Activated CD4-positive, alpha-beta T cell treated with anti-CD3 and anti-CD28 coated beads for 36 hours (primary cell): ENCODE measurements at regions of chr1 and their contacts with region 1.

Region 1: GRCh38 chr1:192808518-192809306 is at the start of gene RGS2:
- DNase-seq: peak; percentile 92
- ATAC-seq: peak; percentile 93
- H3K4me3 Mint-ChIP-seq: peak within 1 kb of the TSS; percentile 87
- H3K27ac Mint-ChIP-seq: peak within 1 kb of the TSS; percentile 92
- H3K4me1 Mint-ChIP-seq: peaks cover 29% of the 10 kb centered on the region
- H3K27me3 Mint-ChIP-seq: no peaks in the 10 kb centered on the region
- total RNA-seq, gene RGS2: 5.1 to 5.3 TPM

Region 2: GRCh38 chr1:192580351-192580962 is 228.3 kb before region 1 on chr1:
- CTCF ChIA-PET with region 1: no interaction called
- POLR2A ChIA-PET with region 1: no interaction called
- intact Hi-C with region 1: loop called in 1 of 2 experiments (anchors 10 kb)
- DNase-seq: no peak
- ATAC-seq: peak; percentile 38
- H3K4me3 Mint-ChIP-seq: peak overlapping the region; percentile 76
- H3K27ac Mint-ChIP-seq: no peak overlapping the region
- H3K4me1 Mint-ChIP-seq: peaks cover 50% of the 10 kb centered on the region
- H3K27me3 Mint-ChIP-seq: no peaks in the 10 kb centered on the region

Region 3: DNA sequence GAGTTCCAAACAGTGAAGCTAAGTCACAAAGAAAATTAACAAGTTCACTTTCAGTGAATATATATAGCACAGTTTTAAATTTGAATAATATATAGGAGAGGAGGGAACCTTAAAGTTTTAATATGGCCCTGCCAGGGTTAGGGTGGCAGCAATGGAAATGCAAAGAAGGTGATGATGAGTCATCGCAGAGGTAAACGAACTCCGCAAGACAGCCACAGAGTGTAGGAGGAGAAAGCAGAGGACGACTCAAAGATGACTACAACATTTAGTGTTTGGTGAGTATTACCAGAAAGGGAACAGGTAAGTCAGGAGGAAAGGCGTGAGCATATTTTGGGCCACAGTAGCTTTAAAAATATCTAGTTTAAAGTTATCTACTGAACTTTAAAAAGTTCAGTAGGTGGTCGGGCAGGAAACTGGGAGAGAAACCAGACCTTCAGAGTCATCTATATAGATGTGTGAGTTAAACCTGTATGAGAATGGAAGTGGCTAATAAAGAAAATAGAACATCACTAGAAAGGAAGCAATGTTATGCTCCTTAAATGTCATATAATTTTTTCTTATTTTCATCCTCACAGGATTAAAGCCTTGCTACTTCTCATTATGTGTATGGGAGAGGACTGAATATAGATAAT is 174.8 kb after region 1 on chr1:
- CTCF ChIA-PET with region 1: interaction called, 6 read pairs
- POLR2A ChIA-PET with region 1: interaction called, 4 read pairs
- intact Hi-C with region 1: loop called (anchors 1 kb)
- DNase-seq: peak; percentile 67
- ATAC-seq: peak; percentile 84
- H3K4me3 Mint-ChIP-seq: no peak overlapping the region
- H3K27ac Mint-ChIP-seq: peak overlapping the region; percentile 76
- H3K4me1 Mint-ChIP-seq: peaks cover 39% of the 10 kb centered on the region
- H3K27me3 Mint-ChIP-seq: no peaks in the 10 kb centered on the region

Region 4: GRCh38 chr1:193059268-193060225 is 250.8 kb after region 1 on chr1 and contains the starts of genes RO60 and UCHL5:
- CTCF ChIA-PET with region 1: interaction called, 6 read pairs
- POLR2A ChIA-PET with region 1: interaction called, 16 read pairs
- intact Hi-C with region 1: loop called (anchors 1 kb)
- DNase-seq: peak; percentile 97
- ATAC-seq: peak; percentile 94
- H3K4me3 Mint-ChIP-seq: peak within 1 kb of the TSS; percentile 90
- H3K27ac Mint-ChIP-seq: peak within 1 kb of the TSS; percentile 99
- H3K4me1 Mint-ChIP-seq: peaks cover 50% of the 10 kb centered on the region
- H3K27me3 Mint-ChIP-seq: no peaks in the 10 kb centered on the region
- total RNA-seq, gene RO60: 45.4 to 57.3 TPM
- total RNA-seq, gene UCHL5: 94.5 to 141 TPM

Region 5: DNA sequence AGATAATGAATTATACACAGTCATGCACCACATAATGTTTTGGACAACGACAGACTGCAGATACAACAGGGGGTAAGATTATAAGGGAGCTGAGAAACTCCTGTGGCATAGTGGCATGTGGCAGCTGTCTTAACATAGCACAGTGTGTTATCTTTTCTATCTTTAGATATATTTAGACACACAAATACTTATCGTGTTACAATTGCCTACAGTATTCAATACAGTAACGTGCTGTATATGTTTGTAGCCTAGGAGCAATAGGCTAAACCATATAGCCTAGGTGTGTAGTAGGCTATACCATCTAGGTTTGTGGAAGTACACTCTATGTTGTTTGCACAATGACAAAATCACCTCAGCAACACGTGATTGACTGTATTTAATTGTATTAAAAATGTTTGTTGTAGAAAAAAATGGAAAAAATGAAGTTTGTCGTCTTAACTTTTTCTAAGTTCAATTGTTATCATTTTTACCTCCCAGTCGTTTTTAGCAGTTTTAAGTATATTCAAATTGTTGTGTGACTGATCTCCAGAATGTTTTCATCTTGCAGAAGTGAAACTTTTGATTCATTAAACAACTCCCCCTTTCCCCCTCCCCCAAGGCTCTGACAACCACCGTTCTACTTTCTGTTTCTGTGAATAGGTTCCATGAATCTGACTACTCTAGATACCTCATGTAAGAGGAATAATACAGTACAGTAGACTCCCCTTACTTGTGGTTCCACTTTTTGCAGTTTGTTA is 728.7 kb after region 1 on chr1:
- CTCF ChIA-PET with region 1: no interaction called
- POLR2A ChIA-PET with region 1: no interaction called
- intact Hi-C with region 1: loop called in 1 of 2 experiments (anchors 5 kb)
- DNase-seq: peak; percentile 84
- ATAC-seq: peak; percentile 89
- H3K4me3 Mint-ChIP-seq: no peak overlapping the region
- H3K27ac Mint-ChIP-seq: peak overlapping the region; percentile 53
- H3K4me1 Mint-ChIP-seq: peaks cover 47% of the 10 kb centered on the region
- H3K27me3 Mint-ChIP-seq: no peaks in the 10 kb centered on the region